Activated CD8-positive, alpha-beta T cell treated with anti-CD3 and anti-CD28 coated beads, Interleukin-2, amount 10 ng/mL, durations not matched to agents 7 days and 5 days (primary cell): ENCODE measurements at regions of chr3 and their contacts with region 1.

Region 1: GRCh38 chr3:16247276-16248061 is 17.3 kb downstream of the DPH3 start:
- DNase-seq: peak; percentile 86
- ATAC-seq: peak; percentile 90
- H3K4me3 Mint-ChIP-seq: no peak overlapping the region
- H3K27ac Mint-ChIP-seq: no peak overlapping the region
- H3K4me1 Mint-ChIP-seq: peaks cover 12% of the 10 kb centered on the region
- H3K27me3 Mint-ChIP-seq: no peaks in the 10 kb centered on the region

Region 2: GRCh38 chr3:16258866-16259265 is 11.4 kb after region 1 on chr3:
- CTCF ChIA-PET with region 1: interaction called, 18 read pairs
- POLR2A ChIA-PET with region 1: no interaction called
- DNase-seq: no peak
- ATAC-seq: no peak
- H3K4me3 Mint-ChIP-seq: no peak overlapping the region
- H3K27ac Mint-ChIP-seq: peak overlapping the region; percentile 31
- H3K4me1 Mint-ChIP-seq: peaks cover 19% of the 10 kb centered on the region
- H3K27me3 Mint-ChIP-seq: no peaks in the 10 kb centered on the region

Region 3: GRCh38 chr3:16290007-16290826 is 42.7 kb after region 1 on chr3:
- CTCF ChIA-PET with region 1: no interaction called
- POLR2A ChIA-PET with region 1: no interaction called
- DNase-seq: peak; percentile 78
- ATAC-seq: peak; percentile 17
- H3K4me3 Mint-ChIP-seq: peak overlapping the region; percentile 92
- H3K27ac Mint-ChIP-seq: peak overlapping the region; percentile 88
- H3K4me1 Mint-ChIP-seq: peaks cover 55% of the 10 kb centered on the region
- H3K27me3 Mint-ChIP-seq: no peaks in the 10 kb centered on the region